CD14-positive monocyte (primary cell): ENCODE measurements at regions of chr7 and their contacts with region 1.

Region 1: DNA sequence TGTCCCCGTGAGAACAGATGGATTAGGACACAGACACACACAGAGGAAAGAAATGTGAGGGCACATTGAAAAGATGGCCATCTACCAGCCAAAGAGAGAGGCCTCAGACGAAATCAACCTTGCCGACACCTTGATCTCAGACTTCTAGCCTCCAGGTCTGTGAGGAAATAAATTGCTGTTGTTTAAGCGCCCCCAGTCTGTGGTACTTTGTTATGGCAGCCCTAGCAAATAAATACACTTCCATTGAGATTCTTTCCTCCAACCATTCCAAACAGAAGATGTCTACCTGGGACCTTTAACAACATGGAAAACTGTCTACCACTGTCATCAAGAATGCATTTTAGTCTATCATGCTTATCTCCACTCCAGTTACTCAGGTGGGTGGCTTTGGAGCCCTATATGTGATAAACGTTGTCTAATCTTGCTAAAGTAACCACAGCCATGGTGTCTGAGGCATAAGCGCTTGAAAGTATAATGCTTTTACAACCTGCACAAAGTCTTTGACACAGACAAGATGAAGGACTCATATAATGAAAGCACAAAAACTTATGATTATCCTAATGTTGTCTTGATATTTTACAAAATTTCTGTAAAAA is 244.3 kb downstream of the MTERF1 start:
- DNase-seq: peak in 2 of 3 donors; percentile 9 to 12
- H3K4me3 ChIP-seq: no peak overlapping the region
- H3K4me3 Mint-ChIP-seq: no peak overlapping the region
- H3K27ac ChIP-seq: no peak overlapping the region
- H3K27ac Mint-ChIP-seq: no peak overlapping the region
- H3K4me1 ChIP-seq: no peaks in the 10 kb centered on the region
- H3K4me1 Mint-ChIP-seq: no peaks in the 10 kb centered on the region
- H3K27me3 ChIP-seq: peaks cover 0 to 2% of the 10 kb centered on the region in 2 donors
- H3K27me3 Mint-ChIP-seq: peaks cover 0 to 2% (median 0%) of the 10 kb centered on the region in 3 donors
- CTCF ChIP-seq: peak; percentile 73

Region 2: GRCh38 chr7:91082852-91083495 is 553.3 kb before region 1 on chr7:
- intact Hi-C with region 1: loop called (anchors 5 kb)
- DNase-seq: no peak
- H3K4me3 ChIP-seq: no peak overlapping the region
- H3K4me3 Mint-ChIP-seq: no peak overlapping the region
- H3K27ac ChIP-seq: peak overlapping the region in 1 of 2 donors; percentile 24
- H3K27ac Mint-ChIP-seq: no peak overlapping the region
- H3K4me1 ChIP-seq: no peaks in the 10 kb centered on the region
- H3K4me1 Mint-ChIP-seq: no peaks in the 10 kb centered on the region
- H3K27me3 ChIP-seq: no peaks in the 10 kb centered on the region
- H3K27me3 Mint-ChIP-seq: no peaks in the 10 kb centered on the region
- CTCF ChIP-seq: peak; percentile 67

Region 3: DNA sequence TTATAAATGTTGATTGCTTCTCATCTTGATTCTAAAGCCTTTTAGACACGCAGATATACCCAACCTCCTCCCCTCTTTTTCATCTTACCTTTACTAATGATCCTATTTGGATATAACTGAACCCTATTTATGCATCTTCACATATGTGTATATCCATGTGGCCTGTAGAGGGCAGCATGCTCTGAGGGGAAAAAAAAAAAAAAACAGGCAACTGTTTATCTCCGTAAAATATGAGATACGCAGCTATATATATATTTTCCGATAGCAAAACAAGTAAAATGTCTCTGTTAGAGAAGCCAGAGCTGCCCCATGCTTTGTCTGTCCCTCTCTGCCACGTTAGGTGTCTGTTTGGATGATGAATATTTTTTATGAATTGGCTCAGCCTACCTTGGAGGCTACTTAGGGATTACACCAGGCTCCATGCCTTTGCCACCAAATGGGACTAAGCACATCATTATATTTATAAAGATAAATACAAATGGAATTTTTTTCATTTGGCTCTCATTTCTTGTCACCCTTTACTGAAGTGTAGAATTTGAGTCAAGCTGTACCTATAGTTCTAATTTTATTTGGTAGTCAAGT is 546.8 kb before region 1 on chr7:
- intact Hi-C with region 1: loop called (anchors 5 kb)
- DNase-seq: peak; percentile 6 to 21 (median 19)
- H3K4me3 ChIP-seq: peak overlapping the region in 1 of 3 experiments; percentile 37
- H3K4me3 Mint-ChIP-seq: no peak overlapping the region
- H3K27ac ChIP-seq: no peak overlapping the region
- H3K27ac Mint-ChIP-seq: no peak overlapping the region
- H3K4me1 ChIP-seq: peaks cover 0 to 3% of the 10 kb centered on the region in 2 donors
- H3K4me1 Mint-ChIP-seq: peaks cover 6% of the 10 kb centered on the region
- H3K27me3 ChIP-seq: no peaks in the 10 kb centered on the region
- H3K27me3 Mint-ChIP-seq: no peaks in the 10 kb centered on the region
- CTCF ChIP-seq: peak; percentile 84

Region 4: DNA sequence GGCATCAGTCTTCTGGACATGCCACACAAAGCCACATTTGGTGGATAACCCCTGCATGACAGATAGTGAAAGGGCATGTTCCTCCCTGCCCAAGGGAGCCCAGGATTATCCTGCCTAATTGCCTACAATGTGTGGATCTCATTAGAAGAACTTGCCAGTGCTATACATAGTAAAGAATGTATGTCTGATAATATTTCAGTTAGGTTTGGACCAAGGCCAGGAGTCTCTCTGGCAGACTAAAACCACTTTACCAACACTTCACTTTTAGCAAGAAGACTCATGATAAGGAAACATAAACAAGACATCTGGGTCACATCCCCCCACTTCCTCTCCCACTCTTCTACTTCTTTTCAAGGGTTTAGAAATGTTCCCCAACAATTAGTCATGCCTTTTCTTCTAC is 47.6 kb after region 1 on chr7:
- intact Hi-C with region 1: no loop called
- DNase-seq: no peak
- H3K4me3 ChIP-seq: no peak overlapping the region
- H3K4me3 Mint-ChIP-seq: no peak overlapping the region
- H3K27ac ChIP-seq: no peak overlapping the region
- H3K27ac Mint-ChIP-seq: no peak overlapping the region
- H3K4me1 ChIP-seq: no peaks in the 10 kb centered on the region
- H3K4me1 Mint-ChIP-seq: peaks cover 3% of the 10 kb centered on the region
- H3K27me3 ChIP-seq: no peaks in the 10 kb centered on the region
- H3K27me3 Mint-ChIP-seq: peaks cover 0 to 2% (median 2%) of the 10 kb centered on the region in 3 donors
- CTCF ChIP-seq: no peak